Heart right ventricle (tissue), 16 donors: ENCODE measurements at regions of chr1 and their contacts with region 1.

Region 1: GRCh38 chr1:46747683-46748288 is 28.9 kb upstream of the EFCAB14 start:
- DNase-seq: peak in 1 of 2 donors; percentile 41
- ATAC-seq: peak; percentile 74 to 87 (median 84)
- H3K4me3 ChIP-seq: no peak overlapping the region
- H3K27ac ChIP-seq: no peak overlapping the region
- H3K4me1 ChIP-seq: no peaks in the 10 kb centered on the region
- H3K27me3 ChIP-seq: peaks cover 0 to 37% (median 4%) of the 10 kb centered on the region in 7 donors
- CTCF ChIP-seq: peak; percentile 57 to 77 (median 71)

Region 2: GRCh38 chr1:46691997-46692790 is 55.6 kb before region 1 on chr1:
- intact Hi-C with region 1: no loop called
- DNase-seq: peak in 1 of 2 donors; percentile 33
- ATAC-seq: peak in 1 of 8 donors; percentile 47
- H3K4me3 ChIP-seq: no peak overlapping the region
- H3K27ac ChIP-seq: peak overlapping the region in 1 of 10 donors; percentile 23
- H3K4me1 ChIP-seq: peaks cover 0 to 38% (median 27%) of the 10 kb centered on the region in 9 donors
- H3K27me3 ChIP-seq: no peaks in the 10 kb centered on the region
- CTCF ChIP-seq: peak in 1 of 9 donors; percentile 11

Region 3: DNA sequence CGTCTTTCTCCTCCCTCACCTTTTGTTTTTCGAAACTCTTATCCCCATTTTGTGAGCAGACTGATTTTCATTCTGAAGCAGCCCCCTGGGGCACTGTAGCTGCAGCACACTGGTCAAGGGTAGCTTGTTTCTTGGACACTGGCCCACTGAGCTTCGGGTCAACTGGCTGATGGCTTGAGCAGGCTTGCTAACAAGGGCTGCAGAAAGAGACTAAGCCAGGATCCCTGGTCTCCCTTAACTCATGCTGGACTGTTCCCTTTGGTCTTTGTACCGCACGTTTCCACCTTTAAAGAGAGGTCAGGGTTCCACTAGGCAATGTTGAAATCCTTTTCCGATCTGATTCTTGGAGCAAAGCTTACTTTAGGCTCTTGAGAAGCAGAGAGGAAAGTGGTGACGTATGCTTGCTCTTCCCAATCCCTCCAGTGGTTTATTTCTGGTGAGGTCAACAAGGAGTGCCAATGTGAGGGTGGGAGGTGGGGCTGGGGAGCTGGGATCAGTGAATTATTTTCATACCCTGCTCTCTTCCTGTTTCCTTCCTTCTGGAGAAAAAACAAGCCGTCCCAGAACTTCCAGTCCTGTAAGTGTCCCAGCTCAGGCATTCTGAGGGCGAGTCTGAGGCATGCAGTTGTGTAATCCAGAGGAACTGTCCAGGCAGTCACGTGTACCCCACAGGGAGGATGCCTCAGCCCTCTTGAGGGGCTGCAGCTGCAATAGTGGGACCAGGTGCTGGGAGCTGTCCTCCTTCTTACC is 58.7 kb after region 1 on chr1:
- intact Hi-C with region 1: loop called in 2 of 10 experiments (anchors 5 to 10 kb)
- DNase-seq: peak; percentile 53 to 69
- ATAC-seq: peak; percentile 85 to 93 (median 92)
- H3K4me3 ChIP-seq: peak overlapping the region in 5 of 10 donors; percentile 3 to 18 (median 10)
- H3K27ac ChIP-seq: peak overlapping the region; percentile 48 to 92 (median 81)
- H3K4me1 ChIP-seq: peaks cover 31 to 58% (median 43%) of the 10 kb centered on the region in 9 donors
- H3K27me3 ChIP-seq: peaks cover 0 to 3% (median 0%) of the 10 kb centered on the region in 7 donors
- CTCF ChIP-seq: no peak

Region 4: DNA sequence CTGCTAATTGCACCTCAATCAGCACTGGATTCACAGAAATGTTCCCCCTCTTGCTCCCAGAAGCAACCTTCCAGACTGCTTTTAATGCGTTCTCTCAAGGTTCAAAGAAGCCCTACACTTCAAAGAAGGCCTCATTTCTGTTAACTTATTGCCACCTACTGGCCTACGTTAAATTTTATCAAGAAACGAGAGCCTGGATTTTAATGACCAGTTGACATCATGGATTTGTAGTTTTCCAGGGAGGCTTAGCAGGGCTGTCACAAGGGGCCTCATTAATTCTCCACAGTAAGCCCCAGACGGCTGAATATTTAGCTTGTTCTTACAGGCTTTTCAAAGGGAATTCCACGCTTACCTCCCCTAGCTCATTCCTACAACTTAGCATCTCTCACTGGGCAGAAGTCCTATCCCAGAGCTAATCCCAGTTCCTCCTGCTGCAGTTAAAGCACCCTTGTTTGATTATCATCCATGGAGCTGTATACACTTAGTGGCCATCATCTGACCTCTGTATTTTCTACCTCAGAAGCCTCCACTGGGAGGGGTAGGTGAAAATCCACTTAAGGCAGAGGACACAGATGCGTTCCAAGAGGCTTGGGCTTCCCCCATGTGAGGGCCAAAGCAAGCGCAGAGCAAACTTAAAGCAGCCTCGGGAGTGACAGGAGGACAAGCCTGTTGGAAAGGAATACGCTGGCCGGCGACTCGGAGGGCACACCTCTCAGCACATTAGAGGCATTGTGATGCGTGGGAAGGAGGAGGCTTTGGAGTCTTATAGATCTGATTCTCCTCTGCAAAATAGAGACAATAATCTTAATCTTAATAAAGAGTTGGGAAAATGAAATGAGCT is 243.5 kb after region 1 on chr1:
- intact Hi-C with region 1: loop called in 8 of 10 experiments (anchors 1 to 10 kb)
- DNase-seq: no peak
- ATAC-seq: no peak
- H3K4me3 ChIP-seq: no peak overlapping the region
- H3K27ac ChIP-seq: no peak overlapping the region
- H3K4me1 ChIP-seq: no peaks in the 10 kb centered on the region
- H3K27me3 ChIP-seq: peaks cover 0 to 3% (median 0%) of the 10 kb centered on the region in 7 donors
- CTCF ChIP-seq: peak in 7 of 9 donors; percentile 23 to 45 (median 28)

Region 5: GRCh38 chr1:46996659-46997281 is 249.0 kb after region 1 on chr1:
- intact Hi-C with region 1: loop called in 8 of 10 experiments (anchors 1 to 10 kb)
- DNase-seq: no peak
- ATAC-seq: no peak
- H3K4me3 ChIP-seq: no peak overlapping the region
- H3K27ac ChIP-seq: no peak overlapping the region
- H3K4me1 ChIP-seq: no peaks in the 10 kb centered on the region
- H3K27me3 ChIP-seq: peaks cover 0 to 15% (median 0%) of the 10 kb centered on the region in 7 donors
- CTCF ChIP-seq: no peak

Region 6: DNA sequence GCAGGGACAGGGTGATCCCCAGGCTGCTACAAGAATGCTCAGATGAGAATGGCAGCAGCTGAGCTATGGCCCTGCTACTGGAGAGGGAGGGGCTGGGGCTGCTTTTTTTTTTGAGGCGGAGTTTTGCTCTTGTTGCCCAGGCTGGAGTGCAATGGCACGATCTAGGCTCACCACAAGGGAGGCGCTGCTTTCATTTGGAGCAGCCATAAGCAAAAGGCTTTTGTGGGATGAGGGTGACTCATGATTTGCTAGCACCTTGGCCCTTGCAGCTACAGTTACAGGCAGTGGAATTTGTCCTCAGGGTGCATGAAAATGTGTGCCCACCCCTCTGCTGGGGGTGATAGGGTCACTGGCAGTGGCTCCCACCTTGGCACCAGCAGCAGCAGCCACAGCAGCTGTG is 357.0 kb after region 1 on chr1:
- intact Hi-C with region 1: loop called in 1 of 10 experiments (anchors 10 kb)
- DNase-seq: no peak
- ATAC-seq: no peak
- H3K4me3 ChIP-seq: no peak overlapping the region
- H3K27ac ChIP-seq: no peak overlapping the region
- H3K4me1 ChIP-seq: no peaks in the 10 kb centered on the region
- H3K27me3 ChIP-seq: no peaks in the 10 kb centered on the region
- CTCF ChIP-seq: no peak